ENCODE measurements at regions of chr17 and their contacts with region 1.

Region 1: DNA sequence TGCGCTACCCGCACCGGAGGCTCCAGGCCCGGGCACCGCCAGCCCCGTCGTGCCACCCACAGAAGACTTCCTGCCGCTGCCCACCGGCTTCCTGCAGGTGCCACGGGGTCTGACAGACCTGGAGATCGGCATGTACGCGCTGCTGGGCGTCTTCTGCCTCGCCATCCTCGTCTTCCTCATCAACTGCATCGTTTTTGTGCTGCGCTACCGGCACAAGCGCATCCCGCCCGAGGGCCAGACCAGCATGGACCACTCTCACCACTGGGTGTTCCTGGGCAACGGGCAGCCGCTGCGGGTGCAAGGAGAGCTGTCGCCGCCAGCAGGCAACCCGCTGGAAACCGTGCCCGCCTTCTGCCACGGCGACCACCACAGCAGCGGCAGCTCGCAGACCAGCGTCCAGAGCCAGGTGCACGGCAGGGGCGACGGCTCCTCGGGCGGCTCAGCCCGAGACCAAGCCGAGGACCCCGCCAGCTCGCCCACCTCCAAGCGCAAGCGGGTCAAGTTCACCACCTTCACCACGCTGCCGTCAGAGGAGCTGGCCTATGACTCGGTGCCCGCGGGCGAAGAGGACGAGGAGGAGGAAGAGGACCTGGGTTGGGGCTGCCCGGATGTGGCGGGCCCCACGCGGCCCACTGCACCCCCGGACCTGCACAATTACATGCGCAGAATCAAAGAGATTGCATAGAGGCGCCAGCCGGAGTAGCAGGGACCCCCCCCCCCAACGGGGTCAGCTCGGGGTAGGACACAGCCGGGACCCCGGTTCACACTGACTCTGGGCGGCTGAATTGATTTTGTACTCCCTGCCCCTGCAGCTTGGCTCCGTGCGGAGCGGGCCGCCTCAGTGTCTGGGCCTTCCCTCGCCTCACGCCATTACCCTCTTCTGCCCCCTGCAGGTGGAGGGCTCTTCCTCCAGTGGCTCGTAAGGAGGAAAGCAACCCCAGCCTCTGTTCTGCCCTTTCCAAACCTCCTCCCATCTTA is 58.5 kb downstream of the TMEM132E start:
- DNase-seq: peak; percentile 80
- ATAC-seq: peak; percentile 89
- H3K4me3 ChIP-seq: peak overlapping the region in 4 of 5 experiments; percentile 47 to 59 (median 54)
- H3K4me3 Mint-ChIP-seq: peak overlapping the region; percentile 83
- H3K27ac ChIP-seq: no peak overlapping the region
- H3K27ac Mint-ChIP-seq: no peak overlapping the region
- H3K4me1 ChIP-seq: peaks cover 8 to 16% of the 10 kb centered on the region in 2 donors
- H3K4me1 Mint-ChIP-seq: peaks cover 12% of the 10 kb centered on the region
- H3K27me3 ChIP-seq: peaks cover 0 to 35% (median 1%) of the 10 kb centered on the region in 4 experiments
- H3K27me3 Mint-ChIP-seq: peaks cover 56% of the 10 kb centered on the region
- CTCF ChIP-seq: peak; percentile 86

Region 2: GRCh38 chr17:34095106-34095505 is 542.7 kb before region 1 on chr17:
- CTCF ChIA-PET with region 1: no interaction called
- POLR2A ChIA-PET with region 1: no interaction called
- intact Hi-C with region 1: no loop called
- DNase-seq: no peak
- ATAC-seq: no peak
- H3K4me3 ChIP-seq: no peak overlapping the region
- H3K4me3 Mint-ChIP-seq: no peak overlapping the region
- H3K27ac ChIP-seq: no peak overlapping the region
- H3K27ac Mint-ChIP-seq: no peak overlapping the region
- H3K4me1 ChIP-seq: no peaks in the 10 kb centered on the region
- H3K4me1 Mint-ChIP-seq: no peaks in the 10 kb centered on the region
- H3K27me3 ChIP-seq: peaks cover 0 to 5% (median 1%) of the 10 kb centered on the region in 4 experiments
- H3K27me3 Mint-ChIP-seq: peaks cover 48% of the 10 kb centered on the region
- CTCF ChIP-seq: no peak

Region 3: DNA sequence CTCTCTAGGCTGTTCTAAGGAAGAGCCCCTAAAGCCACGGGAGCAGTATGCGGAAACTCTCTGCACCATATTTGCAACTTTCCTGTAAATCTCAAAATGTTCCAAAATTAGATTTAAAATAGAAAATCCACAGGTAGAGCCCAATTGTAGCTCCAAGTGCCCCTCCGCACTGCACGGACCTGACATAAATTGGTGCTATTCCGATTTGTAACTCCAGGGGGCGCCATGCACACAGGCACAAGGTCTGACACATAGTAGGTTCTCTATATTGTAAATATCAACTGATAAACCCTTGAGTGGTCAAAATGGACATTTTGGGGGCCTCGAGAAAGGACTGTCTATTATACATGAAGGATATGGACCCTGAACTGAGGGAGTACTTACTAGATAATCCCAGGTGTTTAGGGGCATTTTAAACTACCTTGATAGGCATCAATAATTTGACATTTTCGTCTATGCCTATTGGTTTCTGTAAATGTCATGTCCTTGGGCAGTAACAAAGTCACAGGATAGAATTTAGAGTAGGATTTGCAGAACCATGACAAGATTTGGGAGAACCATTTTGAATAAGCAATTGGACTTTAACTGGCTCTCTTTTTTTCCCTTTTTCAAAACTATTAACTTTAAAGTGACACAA is 95.0 kb before region 1 on chr17:
- CTCF ChIA-PET with region 1: interaction called, 6 read pairs
- POLR2A ChIA-PET with region 1: no interaction called
- intact Hi-C with region 1: loop called (anchors 1 kb)
- DNase-seq: peak; percentile 65
- ATAC-seq: peak; percentile 45
- H3K4me3 ChIP-seq: no peak overlapping the region
- H3K4me3 Mint-ChIP-seq: no peak overlapping the region
- H3K27ac ChIP-seq: no peak overlapping the region
- H3K27ac Mint-ChIP-seq: no peak overlapping the region
- H3K4me1 ChIP-seq: no peaks in the 10 kb centered on the region
- H3K4me1 Mint-ChIP-seq: no peaks in the 10 kb centered on the region
- H3K27me3 ChIP-seq: peaks cover 0 to 22% (median 10%) of the 10 kb centered on the region in 4 experiments
- H3K27me3 Mint-ChIP-seq: peaks cover 44% of the 10 kb centered on the region
- CTCF ChIP-seq: peak; percentile 92

Region 4: GRCh38 chr17:34858591-34859565 is 221.0 kb after region 1 on chr17:
- CTCF ChIA-PET with region 1: no interaction called
- POLR2A ChIA-PET with region 1: no interaction called
- intact Hi-C with region 1: no loop called
- DNase-seq: no peak
- ATAC-seq: no peak
- H3K4me3 ChIP-seq: no peak overlapping the region
- H3K4me3 Mint-ChIP-seq: no peak overlapping the region
- H3K27ac ChIP-seq: no peak overlapping the region
- H3K27ac Mint-ChIP-seq: no peak overlapping the region
- H3K4me1 ChIP-seq: no peaks in the 10 kb centered on the region
- H3K4me1 Mint-ChIP-seq: no peaks in the 10 kb centered on the region
- H3K27me3 ChIP-seq: peaks cover 0 to 11% (median 0%) of the 10 kb centered on the region in 4 experiments
- H3K27me3 Mint-ChIP-seq: peaks cover 31% of the 10 kb centered on the region
- CTCF ChIP-seq: no peak